ENCODE measurements at regions of chr9 and their contacts with region 1.

Region 1: DNA sequence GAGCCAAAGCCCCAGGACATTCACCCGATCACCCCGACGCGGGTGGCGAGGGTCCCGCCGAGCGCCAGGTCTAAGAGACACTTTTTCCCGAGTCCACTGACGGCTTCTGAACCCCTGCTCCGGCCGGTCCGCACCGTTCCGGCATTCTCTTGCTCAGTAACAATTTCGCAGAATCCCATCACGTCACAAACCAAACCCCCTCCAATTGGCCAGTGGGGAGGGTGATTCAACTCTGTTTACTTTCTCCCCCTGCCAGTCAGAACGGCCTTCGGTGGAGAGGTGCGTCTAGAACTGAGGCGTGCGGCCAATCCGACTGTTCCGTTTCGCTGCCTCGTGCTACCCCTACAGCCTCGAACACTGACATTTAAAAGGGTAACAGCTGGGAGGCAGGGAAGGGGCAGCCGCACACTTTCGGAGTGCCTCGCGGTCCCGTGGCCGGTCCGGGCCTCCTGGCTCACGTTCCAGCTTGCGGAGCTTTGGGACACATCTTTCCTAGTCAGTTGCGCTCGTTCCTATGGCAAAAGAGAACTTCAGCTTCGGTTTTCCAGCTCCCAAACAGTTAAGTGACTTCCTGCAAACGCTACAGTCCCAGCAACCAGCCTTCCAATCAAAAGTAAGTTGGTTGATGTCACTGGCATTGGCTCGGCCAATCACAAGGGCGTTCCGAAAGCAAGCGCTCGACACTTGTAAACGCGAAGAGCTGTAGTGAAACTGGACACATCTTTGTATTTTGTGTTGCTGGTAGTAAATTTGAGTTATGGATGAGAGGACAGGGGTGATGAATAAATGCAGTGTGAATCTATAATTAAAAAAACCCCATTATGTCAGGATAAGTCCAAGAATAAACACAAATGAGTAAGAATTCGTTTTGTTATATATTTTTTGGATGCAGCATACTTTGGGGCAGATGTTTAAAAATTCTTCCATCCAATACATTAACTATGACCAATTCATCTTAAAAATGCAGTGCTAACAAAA is at the start of gene KLF9:
- DNase-seq: peak; percentile 97
- ATAC-seq: peak; percentile 82
- H3K4me3 Mint-ChIP-seq: peak within 1 kb of the TSS; percentile 93
- H3K27ac Mint-ChIP-seq: peak within 1 kb of the TSS; percentile 99
- H3K4me1 Mint-ChIP-seq: peaks cover 48% of the 10 kb centered on the region
- H3K27me3 Mint-ChIP-seq: no peaks in the 10 kb centered on the region
- total RNA-seq, gene KLF9: 8.8 to 9.6 TPM

Region 2: DNA sequence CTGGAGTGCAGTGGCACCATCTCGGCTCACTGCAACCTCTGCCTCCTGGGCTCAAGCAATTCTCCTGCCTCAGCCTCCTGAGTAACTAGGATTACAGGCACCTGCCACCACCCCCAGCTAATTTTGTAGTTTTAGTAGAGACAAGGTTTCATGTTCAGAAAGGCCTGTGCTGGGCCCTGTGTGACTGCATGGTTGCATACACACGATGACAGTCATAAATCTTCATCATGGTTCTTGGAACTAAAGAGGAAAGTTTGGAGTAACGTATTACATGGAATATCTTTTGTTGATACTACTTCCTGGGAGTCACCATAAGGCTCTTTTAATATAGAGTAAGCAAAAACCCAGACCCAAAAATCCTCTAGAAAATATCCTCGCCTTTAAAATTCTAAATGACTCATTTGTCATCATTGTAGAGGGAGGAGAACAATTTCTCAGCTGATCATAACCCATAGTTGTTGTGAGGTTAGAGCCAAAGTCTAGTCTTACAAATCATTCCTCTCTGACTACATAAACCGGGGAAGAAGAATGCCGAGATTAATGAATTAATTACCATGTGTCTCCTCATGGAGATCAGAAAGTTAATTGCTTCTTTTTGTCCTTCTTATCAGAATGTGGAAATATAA is 46.7 kb before region 1 on chr9:
- CTCF ChIA-PET with region 1: no interaction called
- POLR2A ChIA-PET with region 1: no interaction called
- DNase-seq: no peak
- ATAC-seq: no peak
- H3K4me3 Mint-ChIP-seq: no peak overlapping the region
- H3K27ac Mint-ChIP-seq: no peak overlapping the region
- H3K4me1 Mint-ChIP-seq: no peaks in the 10 kb centered on the region
- H3K27me3 Mint-ChIP-seq: no peaks in the 10 kb centered on the region

Region 3: DNA sequence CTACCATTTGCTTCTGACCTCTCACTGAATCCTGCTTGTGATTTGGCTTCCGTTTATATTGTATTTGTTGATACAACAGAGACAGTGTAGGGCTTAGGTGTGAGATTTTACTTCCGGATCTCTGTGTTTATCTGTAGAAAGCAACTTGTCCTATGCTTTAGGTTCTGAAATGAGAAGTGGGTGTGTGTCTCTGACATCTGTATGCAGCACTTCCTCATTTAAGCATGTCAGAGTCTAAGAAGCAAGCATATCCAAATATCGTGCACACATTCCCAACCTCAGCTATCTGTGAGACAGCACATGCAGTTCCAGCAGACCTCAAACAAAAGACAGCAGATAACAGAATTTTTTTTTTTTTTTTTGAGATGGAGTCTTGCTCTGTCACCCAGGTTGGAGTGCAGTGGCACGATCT is 15.9 kb before region 1 on chr9:
- CTCF ChIA-PET with region 1: interaction called, 6 read pairs
- POLR2A ChIA-PET with region 1: interaction called, 90 read pairs
- DNase-seq: no peak
- ATAC-seq: peak; percentile 89
- H3K4me3 Mint-ChIP-seq: peak overlapping the region; percentile 51
- H3K27ac Mint-ChIP-seq: peak overlapping the region; percentile 79
- H3K4me1 Mint-ChIP-seq: peaks cover 40% of the 10 kb centered on the region
- H3K27me3 Mint-ChIP-seq: no peaks in the 10 kb centered on the region

Region 4: GRCh38 chr9:70444904-70445303 is 30.8 kb after region 1 on chr9:
- CTCF ChIA-PET with region 1: no interaction called
- POLR2A ChIA-PET with region 1: no interaction called
- DNase-seq: no peak
- ATAC-seq: no peak
- H3K4me3 Mint-ChIP-seq: no peak overlapping the region
- H3K27ac Mint-ChIP-seq: no peak overlapping the region
- H3K4me1 Mint-ChIP-seq: peaks cover 2% of the 10 kb centered on the region
- H3K27me3 Mint-ChIP-seq: peaks cover 3% of the 10 kb centered on the region

Region 5: DNA sequence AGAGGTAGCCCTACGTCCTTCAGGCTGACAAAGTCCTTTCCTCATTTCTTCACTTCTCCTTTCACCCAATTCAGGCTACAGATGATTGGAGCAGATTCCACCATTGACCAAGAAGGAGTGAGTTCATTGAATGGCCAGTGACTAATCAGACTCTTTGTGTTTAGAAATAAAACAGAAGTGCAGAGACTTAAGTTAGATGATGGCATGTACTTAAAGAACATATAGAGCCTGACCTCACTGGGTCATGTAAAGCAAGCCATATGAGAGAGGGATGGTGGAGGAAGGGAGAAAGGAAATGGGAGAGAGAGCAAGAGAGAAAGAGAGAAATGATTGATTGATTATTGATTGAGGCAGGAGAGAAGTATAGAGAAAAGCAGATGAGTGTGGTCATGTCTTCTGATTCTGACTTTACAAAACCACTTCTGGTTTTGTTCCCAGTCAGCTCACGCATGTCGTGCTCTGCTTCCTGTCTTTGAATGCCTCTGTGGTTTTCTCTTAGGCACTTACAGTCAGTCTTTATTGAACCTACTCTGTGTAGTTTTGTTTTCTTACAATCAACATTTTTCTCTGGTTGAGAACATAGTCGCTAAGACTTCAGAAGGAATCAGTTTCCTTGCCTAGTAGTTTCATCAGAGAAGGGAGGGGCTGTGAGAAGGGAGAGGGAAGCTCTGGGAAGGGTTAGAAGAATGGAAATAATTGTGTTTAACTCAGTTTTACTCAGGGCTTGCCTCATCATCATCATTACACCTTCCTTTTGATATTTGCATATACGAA is 149.5 kb after region 1 on chr9:
- CTCF ChIA-PET with region 1: interaction called, 4 read pairs
- POLR2A ChIA-PET with region 1: interaction called, 31 read pairs
- DNase-seq: peak; percentile 78
- ATAC-seq: peak; percentile 91
- H3K4me3 Mint-ChIP-seq: peak overlapping the region; percentile 59
- H3K27ac Mint-ChIP-seq: peak overlapping the region; percentile 95
- H3K4me1 Mint-ChIP-seq: peaks cover 66% of the 10 kb centered on the region
- H3K27me3 Mint-ChIP-seq: no peaks in the 10 kb centered on the region

Measured in activated CD8-positive, alpha-beta T cell treated with anti-CD3 and anti-CD28 coated beads, Interleukin-2, amount 10 ng/mL, durations not matched to agents 7 days and 5 days (primary cell).